HepG2 (cell line): ENCODE measurements at regions of chr16 and their contacts with region 1.

Region 1: DNA sequence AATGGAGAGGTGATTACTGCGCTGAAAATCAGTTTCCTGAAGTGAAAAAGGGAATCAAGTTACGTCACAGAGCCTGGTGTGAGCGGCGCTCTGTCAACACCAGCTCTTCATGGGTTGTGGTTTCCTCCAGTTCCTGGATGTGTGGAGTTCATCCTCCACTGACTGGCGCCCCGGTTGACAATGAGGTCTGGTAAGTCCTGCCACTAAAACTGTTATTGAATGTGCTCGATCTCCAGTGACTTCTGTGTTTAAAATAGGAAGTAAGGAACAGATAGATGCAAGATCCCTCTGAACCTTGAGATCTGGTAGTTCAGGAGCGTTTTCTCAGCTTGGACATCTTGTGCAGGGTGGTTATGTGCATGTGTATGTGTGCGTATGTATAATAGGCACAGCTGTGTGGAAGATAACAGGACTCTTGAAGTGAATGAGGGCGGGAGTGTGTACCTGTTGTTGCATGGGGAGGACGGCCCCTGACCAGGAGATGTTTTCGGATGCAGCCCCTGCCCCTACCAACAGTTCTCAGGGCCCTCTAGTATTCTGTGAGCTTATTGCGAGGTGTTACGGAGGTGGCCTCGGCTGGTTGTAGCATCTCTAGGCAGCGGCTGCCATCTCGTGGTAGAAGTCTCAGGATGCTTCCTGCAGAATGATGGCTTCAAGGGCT is 22.0 kb upstream of the GOT2 start:
- DNase-seq: peak; percentile 81
- ATAC-seq: peak; percentile 98
- H3K4me3 ChIP-seq: no peak overlapping the region; a peak in 1 of 6 replicates
- H3K27ac ChIP-seq: no peak overlapping the region
- H3K4me1 ChIP-seq: peaks cover 6% of the 10 kb centered on the region
- H3K27me3 ChIP-seq: peaks cover 6 to 19% of the 10 kb centered on the region in 2 experiments; a peak in 3 of 5 replicates
- CTCF ChIP-seq: peak; percentile 97
- EP300 ChIP-seq: no peak
- POLR2A ChIP-seq: no peak
- RAD21 ChIP-seq: peak; percentile 94

Region 2: GRCh38 chr16:58494981-58495520 is 261.1 kb before region 1 on chr16:
- CTCF ChIA-PET with region 1: no interaction called
- POLR2A ChIA-PET with region 1: no interaction called
- in situ Hi-C with region 1: no loop called
- intact Hi-C with region 1: loop called (anchors 5 kb)
- DNase-seq: peak; percentile 96
- ATAC-seq: peak; percentile 72
- H3K4me3 ChIP-seq: no peak overlapping the region
- H3K27ac ChIP-seq: no peak overlapping the region
- H3K4me1 ChIP-seq: peaks cover 16% of the 10 kb centered on the region
- H3K27me3 ChIP-seq: peaks cover 0 to 18% of the 10 kb centered on the region in 2 experiments; a peak in 2 of 5 replicates
- CTCF ChIP-seq: peak; percentile 60
- EP300 ChIP-seq: no peak
- POLR2A ChIP-seq: no peak
- RAD21 ChIP-seq: no peak

Region 3: DNA sequence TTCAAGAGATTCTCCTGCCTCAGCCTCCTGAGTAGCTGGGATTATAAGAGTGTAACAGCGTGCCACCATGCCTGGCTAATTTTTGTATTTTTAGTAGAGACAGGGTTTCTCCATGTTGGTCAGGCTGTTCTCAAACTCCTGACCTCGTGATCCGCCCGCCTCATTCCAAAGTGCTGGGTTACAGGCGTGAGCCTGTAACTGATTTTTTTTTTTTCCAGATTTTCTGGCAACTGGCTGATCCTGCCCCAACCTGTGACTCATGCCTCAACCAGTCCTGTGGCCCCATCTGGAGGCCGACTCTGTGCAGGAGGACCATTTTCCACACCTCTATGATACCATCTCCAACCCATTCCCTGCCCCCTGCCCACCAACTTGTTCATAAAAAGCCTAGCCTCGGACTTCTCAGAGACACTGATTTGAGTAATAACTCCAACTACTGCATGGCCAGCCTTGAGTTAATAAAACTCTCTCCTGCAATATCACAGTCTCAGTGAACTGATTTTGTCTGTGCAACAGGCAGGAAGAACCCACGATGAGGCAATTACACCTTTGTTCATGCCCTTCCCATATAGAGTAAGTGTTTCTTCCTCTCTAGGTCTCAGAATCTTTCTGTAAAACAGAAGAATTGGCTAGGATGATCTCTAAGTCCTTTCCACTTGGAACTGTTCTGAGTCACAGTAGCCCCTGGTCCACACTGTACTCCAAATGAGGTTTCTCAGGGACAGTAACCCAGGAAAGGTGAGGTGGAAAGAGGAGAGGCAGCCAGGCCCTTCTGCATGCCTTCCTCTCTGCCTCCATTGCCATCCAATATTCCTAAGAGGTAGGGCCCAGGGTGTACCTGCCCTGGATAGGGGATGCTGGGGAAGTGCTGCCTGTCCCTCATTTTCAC is 117.7 kb before region 1 on chr16:
- CTCF ChIA-PET with region 1: no interaction called
- POLR2A ChIA-PET with region 1: no interaction called
- in situ Hi-C with region 1: no loop called
- intact Hi-C with region 1: loop called (anchors 1 kb)
- DNase-seq: peak; percentile 79
- ATAC-seq: peak; percentile 94
- H3K4me3 ChIP-seq: no peak overlapping the region
- H3K27ac ChIP-seq: no peak overlapping the region
- H3K4me1 ChIP-seq: peaks cover 50% of the 10 kb centered on the region
- H3K27me3 ChIP-seq: no peaks in the 10 kb centered on the region; a peak in 1 of 5 replicates
- CTCF ChIP-seq: peak; percentile 89
- EP300 ChIP-seq: no peak
- POLR2A ChIP-seq: no peak
- RAD21 ChIP-seq: peak; percentile 88

Region 4: DNA sequence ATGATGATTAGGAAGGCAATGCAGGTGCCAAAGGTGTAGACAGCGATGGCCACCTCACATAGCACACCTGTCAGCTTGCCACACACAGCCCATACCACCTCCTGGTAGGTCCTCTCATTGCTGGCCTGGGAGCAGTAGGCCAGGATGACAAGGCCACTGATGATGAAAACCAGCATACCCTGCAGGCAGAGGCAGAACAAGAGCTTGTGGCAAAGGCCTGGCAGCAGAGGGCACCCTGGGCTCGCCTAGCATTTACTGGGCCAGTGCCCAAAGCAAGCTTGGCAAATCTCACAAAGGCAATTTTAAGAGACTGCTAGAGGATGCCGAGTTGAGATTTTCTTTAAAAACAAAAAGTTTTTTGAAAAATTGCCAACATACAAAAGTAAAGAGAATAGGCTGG is 77.4 kb before region 1 on chr16:
- CTCF ChIA-PET with region 1: interaction called, 9 read pairs
- POLR2A ChIA-PET with region 1: interaction called, 7 read pairs
- in situ Hi-C with region 1: loop called (anchors 5 kb)
- intact Hi-C with region 1: loop called (anchors 1 kb)
- DNase-seq: no peak
- ATAC-seq: peak; percentile 23; the same call in 2 of the 3 replicates
- H3K4me3 ChIP-seq: no peak overlapping the region
- H3K27ac ChIP-seq: no peak overlapping the region
- H3K4me1 ChIP-seq: peaks cover 11% of the 10 kb centered on the region
- H3K27me3 ChIP-seq: no peaks in the 10 kb centered on the region
- CTCF ChIP-seq: peak; percentile 38
- EP300 ChIP-seq: no peak
- POLR2A ChIP-seq: no peak
- RAD21 ChIP-seq: no peak